Activated CD4-positive, alpha-beta T cell treated with anti-CD3 and anti-CD28 coated beads, Interleukin-2, amount 10 ng/mL, durations not matched to agents 24 days and 14 days (primary cell): ENCODE measurements at regions of chr3 and their contacts with region 1.

Region 1: DNA sequence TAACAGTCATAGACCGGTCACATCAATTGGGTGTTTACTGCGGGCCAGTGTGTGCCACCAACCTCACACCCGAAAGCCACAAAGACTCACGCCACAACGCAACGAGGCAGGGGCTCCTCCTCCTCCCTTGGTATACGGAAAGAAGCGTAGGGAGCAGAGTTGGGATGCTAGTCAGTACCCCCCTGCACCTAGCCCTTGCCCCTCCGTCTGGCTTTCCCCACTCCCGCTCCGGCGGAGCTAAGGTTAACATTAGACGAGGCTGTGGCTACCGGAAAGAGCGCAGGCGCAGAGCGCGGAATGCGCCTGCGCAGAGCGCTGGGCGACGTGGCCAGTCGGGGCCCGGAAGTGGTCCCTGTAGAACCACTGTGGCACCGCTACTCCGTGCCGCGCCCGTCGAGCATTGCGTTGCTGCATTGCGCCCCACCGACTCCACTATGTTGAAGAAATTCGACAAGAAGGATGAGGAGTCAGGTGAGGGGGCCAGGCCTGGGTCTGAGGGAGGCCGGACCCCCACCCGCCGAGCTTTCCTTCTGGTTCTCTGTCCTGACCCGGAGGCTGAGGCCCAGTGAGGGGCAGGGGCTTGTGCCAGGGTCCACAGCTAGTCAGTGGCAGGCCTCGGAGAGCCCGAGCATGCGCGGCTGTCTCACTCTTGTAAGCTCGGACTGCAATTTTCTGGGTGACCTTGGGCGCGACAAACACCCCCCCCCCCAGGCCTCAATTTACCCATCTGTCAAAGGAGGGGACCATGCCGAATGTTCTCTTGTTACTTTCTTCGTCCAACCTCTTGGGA is at the start of gene COPG1:
- DNase-seq: peak; percentile 98
- H3K4me3 Mint-ChIP-seq: peak within 1 kb of the TSS; percentile 96
- H3K27ac Mint-ChIP-seq: peak within 1 kb of the TSS; percentile 99
- H3K4me1 Mint-ChIP-seq: peaks cover 41% of the 10 kb centered on the region
- H3K27me3 Mint-ChIP-seq: no peaks in the 10 kb centered on the region
- total RNA-seq, gene COPG1: 142 and 164 TPM in 2 replicates

Region 2: GRCh38 chr3:128993461-128994173 is 255.9 kb before region 1 on chr3 and contains the start of gene CFAP92:
- intact Hi-C with region 1: loop called (anchors 10 kb)
- DNase-seq: peak; percentile 98
- H3K4me3 Mint-ChIP-seq: peak within 1 kb of the TSS; percentile 74
- H3K27ac Mint-ChIP-seq: no peak within 1 kb of the TSS
- H3K4me1 Mint-ChIP-seq: peaks cover 30% of the 10 kb centered on the region
- H3K27me3 Mint-ChIP-seq: peaks cover 10% of the 10 kb centered on the region
- total RNA-seq, gene CFAP92: 0.17 TPM in 1 of 2 replicates, not detected in the other

Region 3: DNA sequence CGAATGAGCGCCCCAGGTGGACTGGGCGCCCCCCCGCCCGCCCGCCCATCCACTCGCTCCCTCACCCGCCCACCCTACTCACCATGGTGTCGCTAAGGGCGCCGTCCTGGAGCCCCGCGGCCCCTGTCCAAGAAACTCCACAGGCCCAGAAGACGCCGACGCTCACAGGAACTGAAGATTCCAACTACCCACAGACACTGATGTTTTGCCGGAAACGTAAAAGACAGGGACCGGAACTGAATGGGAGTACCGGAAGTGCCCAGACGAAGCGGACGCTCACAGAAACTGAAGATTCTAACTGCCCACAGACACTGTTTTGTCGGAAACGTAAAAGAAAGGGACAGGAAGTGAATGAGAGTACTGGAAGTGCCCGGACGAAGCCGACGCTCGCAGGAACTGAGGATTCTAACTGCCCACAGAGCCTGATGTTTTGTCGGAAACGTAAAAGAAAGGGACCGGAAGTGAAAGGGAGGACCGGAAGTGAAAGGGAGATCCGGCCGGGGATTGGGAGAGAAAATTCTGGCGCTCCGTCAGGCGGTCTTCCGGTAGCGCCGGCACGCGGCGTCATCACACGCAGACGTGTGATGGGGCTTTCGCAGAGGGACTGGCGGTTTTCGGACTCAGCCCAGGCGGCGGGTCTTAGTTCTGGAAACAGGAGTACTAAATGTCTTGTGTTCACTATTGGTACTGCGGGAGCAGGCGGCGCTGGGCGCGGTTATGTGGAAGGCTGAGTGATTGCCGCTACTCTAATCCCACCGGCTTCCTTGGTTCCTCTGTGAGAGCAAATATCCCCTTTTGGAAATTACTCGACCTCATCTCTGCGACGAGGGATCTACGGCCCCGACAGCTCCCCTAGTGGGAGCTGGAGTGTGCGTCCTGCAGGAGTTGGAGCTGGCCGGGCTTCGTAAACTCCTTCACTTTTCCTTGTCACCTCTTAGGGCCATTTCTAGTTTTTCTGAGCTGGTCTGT is 88.3 kb before region 1 on chr3 and contains the start of gene ISY1:
- intact Hi-C with region 1: loop called (anchors 1 kb)
- DNase-seq: peak; percentile 96
- H3K4me3 Mint-ChIP-seq: peak within 1 kb of the TSS; percentile 98
- H3K27ac Mint-ChIP-seq: peak within 1 kb of the TSS; percentile 98
- H3K4me1 Mint-ChIP-seq: peaks cover 31% of the 10 kb centered on the region
- H3K27me3 Mint-ChIP-seq: peaks cover 3% of the 10 kb centered on the region
- total RNA-seq, gene ISY1: 73.8 and 83.7 TPM in 2 replicates

Region 4: GRCh38 chr3:129230311-129231019 is 19.0 kb before region 1 on chr3:
- intact Hi-C with region 1: loop called (anchors 2 kb)
- DNase-seq: peak; percentile 81
- H3K4me3 Mint-ChIP-seq: peak overlapping the region; percentile 59
- H3K27ac Mint-ChIP-seq: peak overlapping the region; percentile 88
- H3K4me1 Mint-ChIP-seq: peaks cover 67% of the 10 kb centered on the region
- H3K27me3 Mint-ChIP-seq: no peaks in the 10 kb centered on the region

Region 5: DNA sequence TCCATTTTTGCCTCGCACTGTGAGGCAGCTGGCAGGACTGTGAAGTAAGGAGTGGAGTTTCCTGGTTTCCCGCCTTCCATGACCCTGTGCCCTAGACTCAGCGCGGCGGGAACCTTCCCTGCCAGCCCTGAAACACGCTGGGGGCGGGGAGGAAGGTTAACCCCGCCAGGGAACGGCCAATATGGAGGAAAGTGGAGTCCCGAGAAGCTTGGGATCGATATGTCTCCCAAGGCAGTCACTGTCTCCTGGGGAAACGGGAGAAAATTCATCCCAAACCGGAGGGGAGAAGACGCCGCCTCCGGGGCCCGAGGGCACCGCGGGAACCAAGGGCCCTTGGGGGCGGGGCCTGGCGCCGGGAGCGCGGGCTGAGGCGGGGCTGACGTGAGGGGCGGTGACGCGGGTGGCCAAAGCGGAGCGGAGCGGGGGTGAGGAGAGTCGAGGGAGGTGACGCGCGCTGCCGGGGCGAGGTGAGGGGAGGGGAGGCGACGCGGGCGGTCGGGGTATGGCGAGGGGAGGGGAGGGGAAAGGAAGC is 29.0 kb after region 1 on chr3 and contains the start of gene HMCES:
- intact Hi-C with region 1: loop called (anchors 1 kb)
- DNase-seq: peak; percentile 99
- H3K4me3 Mint-ChIP-seq: peak within 1 kb of the TSS; percentile 99
- H3K27ac Mint-ChIP-seq: peak within 1 kb of the TSS; percentile 96
- H3K4me1 Mint-ChIP-seq: peaks cover 43% of the 10 kb centered on the region
- H3K27me3 Mint-ChIP-seq: no peaks in the 10 kb centered on the region
- total RNA-seq, gene HMCES: 58.3 and 62.6 TPM in 2 replicates

Region 6: DNA sequence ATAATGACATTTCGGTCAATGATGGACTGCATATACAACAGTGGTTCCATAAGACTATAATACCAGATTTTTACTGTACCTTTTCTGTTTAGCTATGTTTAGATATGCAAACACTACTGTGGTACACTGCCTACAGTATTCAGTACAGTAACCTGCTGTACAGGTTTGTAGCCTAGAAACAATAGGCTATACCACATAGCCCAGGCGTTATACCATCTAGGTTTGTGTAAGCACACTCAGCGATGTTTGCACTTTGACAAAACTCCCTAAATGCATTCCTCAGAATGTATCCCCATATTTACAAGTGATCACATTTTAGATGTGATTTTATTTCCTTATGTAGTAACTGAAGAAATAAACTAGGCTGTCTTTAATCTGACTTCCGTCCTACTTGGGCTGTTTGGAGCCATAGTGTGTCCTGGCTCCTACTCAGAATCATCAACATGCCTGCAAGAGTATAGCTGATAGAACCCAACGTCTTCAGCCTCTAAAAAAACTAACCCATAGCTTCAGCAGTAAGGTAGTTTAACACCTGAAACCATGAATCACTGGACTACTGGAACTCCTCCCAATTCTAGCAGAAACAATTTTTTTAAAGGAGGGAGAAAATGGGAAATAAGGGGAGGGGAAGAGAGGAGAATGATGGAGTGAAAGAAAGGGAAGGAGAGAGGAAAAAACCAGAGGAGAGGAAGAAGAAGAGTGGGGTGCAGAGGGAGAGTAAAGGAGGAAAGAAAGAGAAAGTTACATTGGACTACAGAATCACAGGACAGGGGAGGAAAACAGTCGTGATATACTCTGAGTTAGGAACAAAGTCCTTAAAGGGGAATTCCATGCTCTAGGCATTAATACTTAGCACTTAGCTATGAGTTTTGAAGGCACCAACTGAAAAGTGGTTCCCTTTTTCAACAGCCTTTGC is 424.7 kb after region 1 on chr3:
- intact Hi-C with region 1: no loop called
- DNase-seq: no peak
- H3K4me3 Mint-ChIP-seq: no peak overlapping the region
- H3K27ac Mint-ChIP-seq: no peak overlapping the region
- H3K4me1 Mint-ChIP-seq: peaks cover 3% of the 10 kb centered on the region
- H3K27me3 Mint-ChIP-seq: no peaks in the 10 kb centered on the region